ENCODE measurements at regions of chr5 and their contacts with region 1.

Region 1: DNA sequence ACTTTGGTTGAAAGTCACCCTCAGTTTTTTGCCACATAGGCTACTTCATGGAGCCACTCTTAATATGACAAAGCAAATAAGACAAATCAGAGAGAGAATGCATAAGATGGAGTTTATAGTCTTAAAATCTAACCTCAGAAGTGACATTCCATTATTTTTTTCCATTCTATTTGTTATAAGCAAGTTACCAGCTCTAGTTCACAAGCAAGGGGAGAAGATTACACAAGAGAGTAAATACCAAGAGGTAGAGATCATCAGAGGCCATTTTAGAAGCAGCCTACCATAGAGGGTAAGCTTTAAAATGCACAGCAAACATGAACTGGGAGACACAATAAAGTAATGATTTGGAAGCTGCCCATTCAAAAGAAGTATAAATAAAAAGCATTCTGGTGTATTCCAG is 651.3 kb upstream of the MEF2C start:
- DNase-seq: no peak
- H3K4me3 ChIP-seq: no peak overlapping the region
- H3K27ac ChIP-seq: no peak overlapping the region
- H3K4me1 ChIP-seq: no peaks in the 10 kb centered on the region
- H3K27me3 ChIP-seq: no peaks in the 10 kb centered on the region
- CTCF ChIP-seq: no peak
- EP300 ChIP-seq: no peak
- POLR2A ChIP-seq: no peak

Region 2: GRCh38 chr5:89595056-89595455 is 60.7 kb after region 1 on chr5:
- in situ Hi-C with region 1: no loop called
- intact Hi-C with region 1: loop called (anchors 2 kb)
- DNase-seq: no peak
- H3K4me3 ChIP-seq: no peak overlapping the region
- H3K27ac ChIP-seq: no peak overlapping the region
- H3K4me1 ChIP-seq: no peaks in the 10 kb centered on the region
- H3K27me3 ChIP-seq: no peaks in the 10 kb centered on the region
- CTCF ChIP-seq: no peak
- EP300 ChIP-seq: no peak
- POLR2A ChIP-seq: no peak

Measured in transverse colon (tissue), 4 donors.